ENCODE measurements at regions of chrX and their contacts with region 1.

Region 1: GRCh38 chrX:154855256-154855655 is 20.8 kb upstream of the SMIM9 start:
- H3K4me3 Mint-ChIP-seq: no peak overlapping the region
- H3K27ac Mint-ChIP-seq: no peak overlapping the region
- H3K4me1 Mint-ChIP-seq: no peaks in the 10 kb centered on the region
- H3K27me3 Mint-ChIP-seq: no peaks in the 10 kb centered on the region

Region 2: DNA sequence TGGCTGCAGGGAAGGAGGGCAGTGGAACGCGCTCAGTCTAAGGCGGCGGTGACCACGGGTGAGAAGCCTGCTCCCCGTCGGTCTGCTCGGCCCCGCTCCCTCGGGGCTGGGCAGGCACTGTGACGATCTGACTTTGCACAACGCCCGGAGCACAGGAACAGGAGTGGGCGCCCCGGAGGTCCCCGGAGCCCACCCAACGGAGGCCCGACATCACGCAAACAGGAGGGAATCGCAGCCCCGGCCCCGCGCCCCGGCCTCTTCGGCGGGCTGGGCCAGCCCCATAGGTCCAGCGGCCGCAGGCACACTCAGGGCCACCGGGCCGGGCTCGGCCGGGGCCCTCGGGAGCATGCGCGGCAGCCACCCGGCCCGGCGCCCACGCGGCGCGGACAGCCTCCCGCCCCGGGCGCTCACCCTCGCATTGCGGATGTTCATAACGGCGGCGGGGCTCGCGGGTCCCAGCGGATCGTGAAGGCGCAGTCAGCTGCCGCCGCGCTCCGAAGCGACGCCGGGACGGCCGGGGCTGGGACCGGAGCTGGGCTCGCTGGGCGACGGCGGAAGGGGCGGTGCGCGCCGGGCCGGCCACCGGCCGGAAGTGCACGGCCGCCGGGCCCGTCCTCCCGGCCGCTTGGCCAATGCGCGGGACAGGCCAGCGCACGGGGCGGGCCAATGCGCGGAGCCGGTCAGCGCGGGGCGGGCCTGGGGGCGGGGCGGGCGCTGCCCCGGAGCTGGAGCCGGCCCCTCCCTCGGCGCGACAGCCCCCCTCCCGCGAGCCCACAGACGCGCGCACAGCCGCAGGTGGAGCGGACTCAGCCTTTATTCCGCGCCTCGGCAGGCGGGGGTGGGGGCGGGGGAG is 920.6 kb before region 1 on chrX and contains the start of gene NAA10:
- intact Hi-C with region 1: no loop called
- H3K4me3 Mint-ChIP-seq: peak within 1 kb of the TSS; percentile 81
- H3K27ac Mint-ChIP-seq: peak within 1 kb of the TSS; percentile 77
- H3K4me1 Mint-ChIP-seq: peaks cover 45% of the 10 kb centered on the region
- H3K27me3 Mint-ChIP-seq: no peaks in the 10 kb centered on the region

Region 3: GRCh38 chrX:154908821-154909220 is 53.6 kb after region 1 on chrX:
- intact Hi-C with region 1: loop called (anchors 10 kb)
- H3K4me3 Mint-ChIP-seq: no peak overlapping the region
- H3K27ac Mint-ChIP-seq: no peak overlapping the region
- H3K4me1 Mint-ChIP-seq: no peaks in the 10 kb centered on the region
- H3K27me3 Mint-ChIP-seq: no peaks in the 10 kb centered on the region